Mammary epithelial cell (primary cell): ENCODE measurements at regions of chr7 and their contacts with region 1.

Region 1: GRCh38 chr7:98760201-98760651 is 109.6 kb downstream of the TMEM130 start:
- DNase-seq: no peak
- H3K4me3 ChIP-seq: no peak overlapping the region
- H3K27ac ChIP-seq: no peak overlapping the region
- H3K4me1 ChIP-seq: no peaks in the 10 kb centered on the region
- H3K27me3 ChIP-seq: no peaks in the 10 kb centered on the region
- CTCF ChIP-seq: no peak

Region 2: GRCh38 chr7:98137826-98138151 is 622.4 kb before region 1 on chr7:
- CTCF ChIA-PET with region 1: no interaction called
- dilution Hi-C with region 1: no loop called
- in situ Hi-C with region 1: no loop called
- intact Hi-C with region 1: no loop called
- DNase-seq: no peak
- H3K4me3 ChIP-seq: no peak overlapping the region
- H3K27ac ChIP-seq: no peak overlapping the region
- H3K4me1 ChIP-seq: peaks cover 20% of the 10 kb centered on the region
- H3K27me3 ChIP-seq: no peaks in the 10 kb centered on the region
- CTCF ChIP-seq: no peak

Region 3: DNA sequence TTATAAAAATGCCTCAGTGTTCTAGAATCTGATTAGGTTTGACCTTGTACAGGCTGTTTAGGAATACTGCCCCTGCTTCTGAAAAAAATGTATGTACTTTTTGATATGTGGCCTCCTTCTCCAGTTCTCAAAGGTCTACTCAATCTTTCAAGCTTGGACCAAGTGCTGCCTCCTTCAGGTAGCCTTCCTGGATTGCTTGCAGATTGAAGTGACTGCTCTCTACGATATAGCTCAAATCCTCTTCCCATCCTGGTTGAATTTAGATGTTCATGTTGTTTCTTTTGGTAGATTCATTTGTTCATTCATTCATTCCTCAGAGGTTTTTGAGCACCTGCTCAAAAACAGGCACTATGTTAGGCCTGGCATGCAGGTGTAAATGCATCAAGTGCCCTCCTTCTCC is 220.3 kb before region 1 on chr7:
- CTCF ChIA-PET with region 1: no interaction called
- dilution Hi-C with region 1: loop called (anchors 5 kb)
- in situ Hi-C with region 1: no loop called
- intact Hi-C with region 1: no loop called
- DNase-seq: no peak
- H3K4me3 ChIP-seq: no peak overlapping the region
- H3K27ac ChIP-seq: no peak overlapping the region
- H3K4me1 ChIP-seq: no peaks in the 10 kb centered on the region
- H3K27me3 ChIP-seq: no peaks in the 10 kb centered on the region
- CTCF ChIP-seq: no peak

Region 4: DNA sequence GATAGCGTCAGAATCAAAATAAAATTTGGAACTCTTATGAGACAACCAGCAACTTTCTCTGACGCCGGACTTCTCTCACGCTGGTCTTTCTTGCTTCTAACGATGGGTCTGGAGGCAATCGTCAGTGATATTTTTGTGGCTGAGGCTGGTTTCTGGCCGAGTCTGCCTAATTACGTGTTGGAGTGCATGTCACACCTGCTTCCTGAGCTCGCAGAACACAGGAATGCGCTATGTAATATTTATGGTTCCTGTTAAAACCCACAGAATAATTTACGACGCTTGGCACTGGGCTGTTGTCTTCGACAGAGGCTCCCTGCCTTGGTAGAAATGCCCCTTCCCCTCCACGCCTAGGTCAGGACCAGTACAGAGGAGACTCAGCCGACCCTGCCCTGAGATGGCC is 78.3 kb before region 1 on chr7:
- CTCF ChIA-PET with region 1: no interaction called
- dilution Hi-C with region 1: no loop called
- in situ Hi-C with region 1: no loop called
- intact Hi-C with region 1: no loop called
- DNase-seq: peak; percentile 3
- H3K4me3 ChIP-seq: no peak overlapping the region
- H3K27ac ChIP-seq: no peak overlapping the region
- H3K4me1 ChIP-seq: no peaks in the 10 kb centered on the region
- H3K27me3 ChIP-seq: peaks cover 2% of the 10 kb centered on the region
- CTCF ChIP-seq: no peak

Region 5: DNA sequence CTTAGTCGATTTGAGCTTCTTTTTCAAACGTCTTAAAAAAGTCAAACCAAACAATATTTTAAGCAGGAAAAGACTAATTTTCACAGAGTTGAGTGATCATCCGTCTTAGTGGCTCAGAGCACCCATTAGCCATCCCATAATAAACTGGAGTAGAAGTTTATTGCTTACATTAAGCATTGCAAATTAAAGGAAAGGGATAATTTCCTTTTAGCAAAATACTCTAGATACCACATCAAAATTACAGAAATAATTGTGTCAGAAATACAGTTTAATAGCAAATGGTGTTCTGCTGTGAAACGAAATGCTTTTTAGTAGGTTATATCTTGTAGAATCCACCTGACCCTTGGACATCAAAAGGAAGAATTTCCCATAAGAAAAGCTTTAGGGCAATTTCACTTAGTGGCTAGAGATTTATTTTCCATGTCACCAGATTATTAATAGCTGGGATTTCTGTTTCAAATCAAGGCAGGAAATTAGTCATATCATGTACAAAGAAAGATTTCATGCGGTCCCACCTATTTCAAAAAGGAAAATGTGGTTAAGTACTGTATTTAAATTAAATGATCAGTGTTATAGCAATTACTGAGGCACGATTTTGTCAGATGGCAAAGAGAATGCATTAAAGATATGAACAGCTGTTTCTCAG is 46.9 kb before region 1 on chr7:
- CTCF ChIA-PET with region 1: no interaction called
- dilution Hi-C with region 1: loop called (anchors 5 kb)
- in situ Hi-C with region 1: no loop called
- intact Hi-C with region 1: no loop called
- DNase-seq: peak; percentile 7
- H3K4me3 ChIP-seq: no peak overlapping the region
- H3K27ac ChIP-seq: no peak overlapping the region
- H3K4me1 ChIP-seq: no peaks in the 10 kb centered on the region
- H3K27me3 ChIP-seq: no peaks in the 10 kb centered on the region
- CTCF ChIP-seq: no peak

Region 6: GRCh38 chr7:98745722-98746318 is 14.4 kb before region 1 on chr7:
- CTCF ChIA-PET with region 1: interaction called, 24 read pairs
- dilution Hi-C with region 1: no loop called
- in situ Hi-C with region 1: no loop called
- intact Hi-C with region 1: no loop called
- DNase-seq: peak; percentile 61
- H3K4me3 ChIP-seq: no peak overlapping the region
- H3K27ac ChIP-seq: no peak overlapping the region
- H3K4me1 ChIP-seq: no peaks in the 10 kb centered on the region
- H3K27me3 ChIP-seq: no peaks in the 10 kb centered on the region
- CTCF ChIP-seq: peak; percentile 82 to 85

Region 7: GRCh38 chr7:98810153-98810802 is 50.1 kb after region 1 on chr7:
- CTCF ChIA-PET with region 1: no interaction called
- dilution Hi-C with region 1: loop called (anchors 5 kb)
- in situ Hi-C with region 1: no loop called
- intact Hi-C with region 1: no loop called
- DNase-seq: no peak
- H3K4me3 ChIP-seq: no peak overlapping the region
- H3K27ac ChIP-seq: no peak overlapping the region
- H3K4me1 ChIP-seq: no peaks in the 10 kb centered on the region
- H3K27me3 ChIP-seq: peaks cover 2% of the 10 kb centered on the region
- CTCF ChIP-seq: no peak

Region 8: DNA sequence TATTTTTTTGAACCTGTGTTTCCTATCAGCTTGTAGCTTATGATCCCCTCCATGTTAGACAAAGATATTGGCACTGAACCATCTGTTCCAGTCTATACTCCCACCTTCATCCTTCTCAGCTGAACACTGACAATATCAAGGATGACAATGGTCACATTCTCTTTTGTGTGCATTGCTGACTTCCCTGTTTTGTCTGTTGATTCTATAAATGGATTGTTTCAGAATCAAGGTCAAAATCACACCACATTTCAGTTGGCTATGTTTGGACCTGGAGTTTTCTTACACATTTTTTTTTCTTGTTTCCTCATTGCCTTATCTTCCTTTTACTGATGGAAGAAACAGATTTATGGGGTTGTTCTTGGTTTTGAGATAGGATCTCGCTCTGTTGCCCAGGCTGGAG is 395.0 kb after region 1 on chr7:
- CTCF ChIA-PET with region 1: no interaction called
- dilution Hi-C with region 1: no loop called
- in situ Hi-C with region 1: no loop called
- intact Hi-C with region 1: no loop called
- DNase-seq: no peak
- H3K4me3 ChIP-seq: no peak overlapping the region
- H3K27ac ChIP-seq: no peak overlapping the region
- H3K4me1 ChIP-seq: no peaks in the 10 kb centered on the region
- H3K27me3 ChIP-seq: no peaks in the 10 kb centered on the region
- CTCF ChIP-seq: no peak